ENCODE measurements at regions of chr6 and their contacts with region 1.

Region 1: DNA sequence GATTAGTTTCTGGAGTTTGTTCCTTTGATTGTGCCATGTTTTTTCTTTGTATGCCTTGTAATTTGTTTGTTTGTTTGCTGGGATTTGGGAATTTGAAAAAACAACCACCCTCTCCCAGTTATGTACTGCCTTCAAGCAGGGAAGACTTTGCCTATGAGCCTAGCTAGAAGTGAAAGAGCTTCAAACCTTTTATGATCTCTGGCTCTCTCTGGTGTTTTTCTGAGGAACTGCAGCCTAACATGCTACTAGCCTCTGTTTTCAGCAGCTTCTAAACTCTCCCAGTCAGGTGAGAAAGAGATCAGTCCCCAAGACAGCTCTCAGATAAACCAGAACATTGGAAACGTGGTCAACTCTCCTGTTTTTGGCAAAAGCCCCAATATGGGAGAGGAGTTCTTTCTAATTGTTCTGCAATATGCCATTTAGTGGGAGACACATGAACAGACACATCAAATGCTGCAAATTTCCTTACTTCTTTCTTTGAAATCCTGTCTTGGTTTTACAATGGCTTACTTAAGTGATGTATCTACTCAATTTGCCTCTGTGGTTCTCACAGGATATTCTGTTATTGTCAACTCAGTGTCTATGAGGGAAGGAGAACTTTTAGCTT is 58.9 kb upstream of the SERINC1 start:
- DNase-seq: peak; percentile 63
- H3K4me3 Mint-ChIP-seq: no peak overlapping the region
- H3K27ac Mint-ChIP-seq: no peak overlapping the region
- H3K4me1 Mint-ChIP-seq: no peaks in the 10 kb centered on the region
- H3K27me3 Mint-ChIP-seq: peaks cover 4% of the 10 kb centered on the region

Region 2: GRCh38 chr6:122381497-122382265 is 148.9 kb before region 1 on chr6:
- CTCF ChIA-PET with region 1: interaction called, 44 read pairs
- DNase-seq: peak; percentile 73
- H3K4me3 Mint-ChIP-seq: no peak overlapping the region
- H3K27ac Mint-ChIP-seq: no peak overlapping the region
- H3K4me1 Mint-ChIP-seq: peaks cover under 1% of the 10 kb centered on the region
- H3K27me3 Mint-ChIP-seq: peaks cover 10% of the 10 kb centered on the region

Region 3: GRCh38 chr6:122476131-122476530 is 54.4 kb before region 1 on chr6:
- CTCF ChIA-PET with region 1: interaction called, 12 read pairs
- DNase-seq: no peak
- H3K4me3 Mint-ChIP-seq: no peak overlapping the region
- H3K27ac Mint-ChIP-seq: no peak overlapping the region
- H3K4me1 Mint-ChIP-seq: peaks cover 7% of the 10 kb centered on the region
- H3K27me3 Mint-ChIP-seq: no peaks in the 10 kb centered on the region

Region 4: GRCh38 chr6:122491919-122492555 is 38.5 kb before region 1 on chr6:
- CTCF ChIA-PET with region 1: interaction called, 172 read pairs
- DNase-seq: peak; percentile 83
- H3K4me3 Mint-ChIP-seq: no peak overlapping the region
- H3K27ac Mint-ChIP-seq: no peak overlapping the region
- H3K4me1 Mint-ChIP-seq: peaks cover 20% of the 10 kb centered on the region
- H3K27me3 Mint-ChIP-seq: peaks cover 12% of the 10 kb centered on the region